ENCODE measurements at regions of chr4 and their contacts with region 1.

Region 1: DNA sequence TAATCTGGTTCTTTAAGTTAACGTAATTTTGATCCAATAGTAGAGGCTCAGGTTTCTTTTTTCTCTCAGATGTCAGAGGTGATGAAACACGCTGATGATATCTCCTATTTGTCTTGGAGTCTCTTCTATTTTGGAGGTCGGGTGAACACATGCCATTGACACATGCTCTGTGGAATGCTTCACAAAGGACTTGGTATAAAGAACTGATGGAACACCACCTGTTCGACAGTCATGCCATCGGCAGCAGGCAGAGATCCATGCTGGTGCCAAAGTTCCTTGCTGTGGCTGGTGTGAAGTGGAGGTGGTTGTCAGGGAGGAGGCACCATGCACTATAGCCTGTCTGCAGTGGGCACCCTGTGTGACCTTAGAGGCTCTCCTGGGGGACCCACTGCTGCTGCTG is 94.9 kb downstream of the ATP8A1 start:
- DNase-seq: no peak
- ATAC-seq: no peak
- H3K4me3 ChIP-seq: no peak overlapping the region
- H3K27ac ChIP-seq: no peak overlapping the region
- H3K4me1 ChIP-seq: no peaks in the 10 kb centered on the region
- H3K27me3 ChIP-seq: no peaks in the 10 kb centered on the region

Region 2: GRCh38 chr4:42750091-42750490 is 188.1 kb after region 1 on chr4:
- intact Hi-C with region 1: loop called in 2 of 4 experiments (anchors 5 to 10 kb)
- DNase-seq: peak in 1 of 3 donors; percentile 42
- ATAC-seq: peak; percentile 70 to 76
- H3K4me3 ChIP-seq: no peak overlapping the region
- H3K27ac ChIP-seq: no peak overlapping the region
- H3K4me1 ChIP-seq: no peaks in the 10 kb centered on the region
- H3K27me3 ChIP-seq: no peaks in the 10 kb centered on the region